ENCODE measurements at regions of chr4 and their contacts with region 1.

Region 1: GRCh38 chr4:83639849-83640493 is 104.1 kb downstream of the GPAT3 start:
- DNase-seq: peak; percentile 84

Region 2: GRCh38 chr4:83516042-83516772 is 123.8 kb before region 1 on chr4:
- in situ Hi-C with region 1: loop called (anchors 10 kb)
- DNase-seq: no peak

Region 3: DNA sequence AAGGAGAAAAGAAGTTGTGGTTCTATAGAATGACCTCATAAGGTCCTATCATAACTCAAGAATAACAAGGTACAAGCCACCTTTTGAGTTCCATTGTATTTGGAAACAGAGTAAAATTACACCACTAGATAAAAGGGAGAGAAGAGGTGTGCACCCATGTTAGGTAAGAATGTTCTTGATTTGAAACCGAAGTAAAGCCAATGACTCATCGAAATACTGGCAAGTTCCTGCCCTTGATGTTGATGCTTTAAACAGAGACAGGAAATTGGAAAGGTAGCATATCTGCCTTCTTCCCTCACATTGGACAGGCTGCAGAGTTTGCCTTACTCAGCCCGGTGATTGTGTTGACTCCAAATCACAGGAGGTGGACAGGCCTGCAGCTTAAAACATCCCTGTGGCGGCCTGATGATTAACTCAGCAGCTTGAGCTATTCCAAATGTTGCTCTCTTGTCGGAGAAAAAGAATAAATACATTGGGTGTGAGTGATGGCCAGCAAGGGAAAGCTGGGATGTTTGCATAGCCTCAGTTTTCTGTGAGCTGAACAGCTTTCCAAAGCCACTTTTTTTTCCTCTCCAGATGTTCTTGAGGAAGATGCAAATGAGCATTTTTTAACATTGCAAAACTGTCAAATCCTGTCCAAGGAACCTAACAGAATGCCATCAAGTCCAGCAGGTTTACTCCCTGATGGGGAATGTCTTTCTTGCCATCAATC is 538.0 kb after region 1 on chr4:
- in situ Hi-C with region 1: no loop called
- DNase-seq: no peak

Region 4: GRCh38 chr4:84503495-84504437 is 863.8 kb after region 1 on chr4:
- in situ Hi-C with region 1: loop called (anchors 25 kb)
- DNase-seq: peak; percentile 79